HCT116 (cell line): ENCODE measurements at regions of chr21 and their contacts with region 1.

Region 1: DNA sequence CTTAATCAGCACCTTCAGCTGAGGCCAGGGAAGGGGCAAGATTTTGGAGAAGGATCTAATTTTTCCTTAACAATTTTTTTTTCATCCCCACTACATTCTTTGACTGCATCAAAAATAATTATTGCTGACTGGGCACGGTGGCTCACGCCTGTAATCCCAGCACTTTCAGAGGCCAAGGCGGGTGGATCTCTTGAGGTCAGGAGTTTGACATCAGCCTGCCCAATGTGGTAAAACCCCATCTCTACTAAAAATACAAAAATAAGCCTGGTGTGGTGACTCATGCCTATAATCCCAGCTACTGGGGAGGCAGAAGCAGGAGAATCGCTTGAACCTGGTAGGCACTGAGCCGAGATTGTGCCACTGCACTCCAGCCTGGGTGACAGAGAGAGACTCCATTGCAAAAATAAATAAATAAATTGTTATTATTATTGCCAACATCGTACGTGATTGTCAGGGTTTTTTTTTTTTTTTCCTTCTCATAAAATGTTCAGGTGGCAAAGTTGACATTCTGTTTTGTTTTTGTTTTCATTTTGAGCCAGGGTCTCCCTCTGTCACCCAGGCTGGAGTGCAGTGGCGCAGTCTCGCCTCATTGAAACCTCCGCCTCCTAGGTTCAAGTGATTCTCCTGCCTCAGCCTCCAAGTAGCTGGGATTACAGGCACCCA is 37.3 kb upstream of the MORC3 start:
- DNase-seq: no peak
- ATAC-seq: no peak
- H3K4me3 ChIP-seq: no peak overlapping the region
- H3K27ac ChIP-seq: no peak overlapping the region
- H3K4me1 ChIP-seq: no peaks in the 10 kb centered on the region
- H3K27me3 ChIP-seq: no peaks in the 10 kb centered on the region
- CTCF ChIP-seq: no peak
- POLR2A ChIP-seq: no peak
- RAD21 ChIP-seq: no peak

Region 2: GRCh38 chr21:35932232-35932911 is 350.3 kb before region 1 on chr21:
- CTCF ChIA-PET with region 1: no interaction called
- POLR2A ChIA-PET with region 1: no interaction called
- RAD21 ChIA-PET with region 1: no interaction called
- intact Hi-C with region 1: no loop called
- DNase-seq: peak; percentile 91
- ATAC-seq: peak; percentile 89
- H3K4me3 ChIP-seq: 0 out of 4 replicates have a peak overlapping the region, but pooled peaks of 1 of the 2 experiments have one; percentile 4
- H3K27ac ChIP-seq: peak overlapping the region; percentile 42
- H3K4me1 ChIP-seq: peaks cover 23 to 31% of the 10 kb centered on the region in 2 experiments
- H3K27me3 ChIP-seq: no peaks in the 10 kb centered on the region
- CTCF ChIP-seq: no peak
- POLR2A ChIP-seq: no peak
- RAD21 ChIP-seq: 0 out of 2 replicates have a peak, but pooled peaks have one; percentile 4

Region 3: DNA sequence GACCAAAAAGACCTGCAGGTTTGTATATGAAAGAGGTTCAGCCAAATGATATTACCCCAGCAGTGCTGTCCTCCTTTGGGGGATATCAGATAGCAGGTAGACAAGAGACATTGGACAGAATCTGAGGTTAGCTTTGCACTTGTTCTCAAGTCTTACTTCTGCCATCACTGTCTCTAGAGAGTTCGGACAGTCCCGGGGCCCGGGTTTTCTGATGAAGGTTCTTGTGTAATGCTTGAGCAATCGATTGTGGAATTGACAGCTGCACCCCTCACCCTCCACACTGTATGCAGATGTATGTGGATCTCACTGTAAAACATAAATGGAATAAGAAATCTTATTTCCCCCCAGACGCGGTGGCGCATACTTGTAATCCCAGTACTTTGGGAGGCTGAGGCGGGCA is 18.9 kb before region 1 on chr21:
- CTCF ChIA-PET with region 1: no interaction called
- POLR2A ChIA-PET with region 1: interaction called, 3 read pairs
- RAD21 ChIA-PET with region 1: no interaction called
- intact Hi-C with region 1: loop called (anchors 1 kb)
- DNase-seq: no peak
- ATAC-seq: no peak
- H3K4me3 ChIP-seq: no peak overlapping the region
- H3K27ac ChIP-seq: no peak overlapping the region
- H3K4me1 ChIP-seq: peaks cover 0 to 3% of the 10 kb centered on the region in 2 experiments; a peak in 1 of 4 replicates
- H3K27me3 ChIP-seq: no peaks in the 10 kb centered on the region
- CTCF ChIP-seq: no peak
- POLR2A ChIP-seq: no peak
- RAD21 ChIP-seq: no peak

Region 4: GRCh38 chr21:36773117-36773516 is 490.4 kb after region 1 on chr21:
- CTCF ChIA-PET with region 1: no interaction called
- POLR2A ChIA-PET with region 1: no interaction called
- RAD21 ChIA-PET with region 1: no interaction called
- intact Hi-C with region 1: no loop called
- DNase-seq: no peak
- ATAC-seq: peak; percentile 77
- H3K4me3 ChIP-seq: no peak overlapping the region
- H3K27ac ChIP-seq: no peak overlapping the region
- H3K4me1 ChIP-seq: peaks cover 8 to 13% of the 10 kb centered on the region in 2 experiments
- H3K27me3 ChIP-seq: no peaks in the 10 kb centered on the region
- CTCF ChIP-seq: no peak
- POLR2A ChIP-seq: no peak
- RAD21 ChIP-seq: no peak